SK-N-SH (cell line): ENCODE measurements at regions of chrX and their contacts with region 1.

Region 1: DNA sequence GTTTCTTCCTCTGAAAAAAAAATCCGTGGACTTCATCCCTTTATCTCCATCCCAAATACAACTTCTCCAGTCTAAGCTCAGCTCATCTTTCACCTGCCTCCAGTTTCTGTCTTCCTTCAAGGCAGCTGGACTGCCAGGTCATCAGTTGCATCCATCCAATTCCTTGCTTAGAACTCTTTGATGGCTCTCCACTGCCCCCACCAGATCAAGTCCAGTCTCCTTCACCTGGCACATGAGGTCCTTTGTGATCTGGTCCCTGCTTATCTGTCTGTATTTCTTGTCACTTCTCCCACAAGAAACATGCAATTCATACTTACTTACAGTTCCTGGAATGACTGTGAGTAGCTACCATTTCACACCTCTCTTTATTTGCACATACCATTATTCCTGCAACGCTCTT is 33.8 kb downstream of the OTUD6A start:
- DNase-seq: no peak
- H3K4me3 ChIP-seq: no peak overlapping the region
- H3K27ac ChIP-seq: no peak overlapping the region
- H3K4me1 ChIP-seq: no peaks in the 10 kb centered on the region
- H3K27me3 ChIP-seq: peaks cover 3% of the 10 kb centered on the region
- CTCF ChIP-seq: peak; percentile 49
- EP300 ChIP-seq: no peak
- RAD21 ChIP-seq: peak; percentile 18; the same call in 1 of the 2 replicates

Region 2: DNA sequence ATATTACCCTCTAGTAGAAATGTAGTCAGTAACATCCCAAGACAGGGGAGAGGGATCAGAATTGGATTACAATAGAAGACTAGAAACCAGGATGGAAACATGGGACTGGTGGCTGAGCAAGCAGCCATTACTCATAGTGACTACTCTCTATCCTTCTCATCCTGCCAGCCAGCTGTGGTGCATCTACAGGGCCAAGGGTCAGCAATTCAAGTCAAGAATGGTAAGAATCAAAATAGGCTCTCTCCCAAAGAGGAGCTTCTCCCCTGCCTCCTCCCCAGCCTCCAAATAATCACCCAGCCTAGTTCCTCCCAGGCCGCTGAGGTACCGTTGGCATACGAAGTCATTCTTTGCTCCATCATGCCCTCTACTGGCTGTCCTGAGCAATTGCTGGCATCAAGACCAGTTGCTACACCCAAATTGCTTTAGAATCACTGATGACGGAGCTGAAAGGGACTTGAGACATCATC is 65.7 kb before region 1 on chrX:
- CTCF ChIA-PET with region 1: interaction called, 19 read pairs
- POLR2A ChIA-PET with region 1: no interaction called
- DNase-seq: peak; percentile 52
- H3K4me3 ChIP-seq: no peak overlapping the region; a peak in 1 of 4 replicates
- H3K27ac ChIP-seq: no peak overlapping the region
- H3K4me1 ChIP-seq: no peaks in the 10 kb centered on the region
- H3K27me3 ChIP-seq: no peaks in the 10 kb centered on the region
- CTCF ChIP-seq: peak; percentile 82
- EP300 ChIP-seq: no peak
- RAD21 ChIP-seq: peak; percentile 68

Region 3: GRCh38 chrX:70042399-70043371 is 53.4 kb before region 1 on chrX:
- CTCF ChIA-PET with region 1: interaction called, 14 read pairs
- POLR2A ChIA-PET with region 1: no interaction called
- DNase-seq: no peak
- H3K4me3 ChIP-seq: no peak overlapping the region
- H3K27ac ChIP-seq: no peak overlapping the region
- H3K4me1 ChIP-seq: no peaks in the 10 kb centered on the region
- H3K27me3 ChIP-seq: no peaks in the 10 kb centered on the region
- CTCF ChIP-seq: no peak
- EP300 ChIP-seq: no peak
- RAD21 ChIP-seq: no peak

Region 4: DNA sequence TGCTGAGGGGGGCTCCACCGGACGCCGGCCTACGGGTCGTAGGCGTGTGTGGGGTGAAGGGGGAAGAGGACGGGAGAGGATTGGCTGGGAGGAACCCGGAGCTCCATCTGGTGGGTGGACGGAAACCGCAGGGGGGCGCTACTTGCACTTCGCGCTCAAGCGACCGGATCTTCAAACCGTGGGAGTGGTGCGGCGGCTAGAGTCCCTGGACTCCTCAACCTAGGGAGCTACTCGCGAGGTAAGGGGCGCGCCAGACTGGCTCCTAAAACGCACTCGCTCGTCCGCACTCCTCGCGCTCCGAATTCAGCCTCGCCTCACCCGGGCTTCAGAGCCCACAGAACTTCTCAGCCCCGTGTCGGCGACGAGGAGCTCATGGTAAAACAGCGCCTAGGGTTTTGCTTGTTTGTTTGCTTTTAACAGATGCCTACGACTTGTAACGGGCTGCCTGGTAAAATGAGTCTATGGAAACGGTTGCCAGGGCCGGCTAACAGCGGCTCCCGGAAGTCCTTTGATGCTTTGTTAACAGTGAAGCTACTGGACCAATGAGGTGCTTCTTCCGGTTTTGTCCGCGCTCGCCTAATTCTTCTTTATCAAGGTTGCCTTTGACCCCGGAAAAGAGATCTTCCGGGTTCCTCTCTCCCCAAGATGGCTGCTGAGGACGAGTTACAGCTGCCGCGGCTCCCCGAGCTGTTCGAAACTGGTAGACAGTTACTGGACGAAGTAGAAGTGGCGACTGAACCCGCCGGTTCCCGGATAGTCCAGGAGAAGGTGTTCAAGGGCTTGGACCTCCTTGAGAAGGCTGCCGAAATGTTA is 37.5 kb after region 1 on chrX and contains the start of gene IGBP1:
- CTCF ChIA-PET with region 1: interaction called, 12 read pairs
- POLR2A ChIA-PET with region 1: no interaction called
- DNase-seq: peak; percentile 86
- H3K4me3 ChIP-seq: peak within 1 kb of the TSS; percentile 68 to 75
- H3K27ac ChIP-seq: peak within 1 kb of the TSS; percentile 90 to 97
- H3K4me1 ChIP-seq: peaks cover 0 to 9% of the 10 kb centered on the region in 2 experiments; a peak in 1 of 4 replicates
- H3K27me3 ChIP-seq: no peaks in the 10 kb centered on the region
- CTCF ChIP-seq: peak; percentile 67
- EP300 ChIP-seq: no peak
- RAD21 ChIP-seq: no peak
- polyA plus RNA-seq, gene IGBP1: 49.4 and 59.9 TPM in 2 replicates

Region 5: GRCh38 chrX:70176938-70177533 is 81.0 kb after region 1 on chrX and contains the start of gene DGAT2L6:
- CTCF ChIA-PET with region 1: no interaction called
- POLR2A ChIA-PET with region 1: no interaction called
- DNase-seq: no peak
- H3K4me3 ChIP-seq: no peak within 1 kb of the TSS
- H3K27ac ChIP-seq: no peak within 1 kb of the TSS
- H3K4me1 ChIP-seq: no peaks in the 10 kb centered on the region; a peak in 1 of 4 replicates
- H3K27me3 ChIP-seq: no peaks in the 10 kb centered on the region
- CTCF ChIP-seq: no peak
- EP300 ChIP-seq: no peak
- RAD21 ChIP-seq: no peak
- polyA plus RNA-seq, gene DGAT2L6: 0.05 TPM in 1 of 2 replicates, not detected in the other

Region 6: GRCh38 chrX:70411475-70411874 is 315.4 kb after region 1 on chrX:
- CTCF ChIA-PET with region 1: no interaction called
- POLR2A ChIA-PET with region 1: no interaction called
- DNase-seq: no peak
- H3K4me3 ChIP-seq: no peak overlapping the region
- H3K27ac ChIP-seq: no peak overlapping the region
- H3K4me1 ChIP-seq: no peaks in the 10 kb centered on the region
- H3K27me3 ChIP-seq: no peaks in the 10 kb centered on the region
- CTCF ChIP-seq: no peak
- EP300 ChIP-seq: no peak
- RAD21 ChIP-seq: no peak